HepG2 (cell line): ENCODE measurements at regions of chr14 and their contacts with region 1.

Region 1: GRCh38 chr14:56555921-56556570 is 23.6 kb upstream of the TMEM260 start:
- DNase-seq: peak; percentile 76
- ATAC-seq: peak; percentile 97
- H3K4me3 ChIP-seq: no peak overlapping the region
- H3K27ac ChIP-seq: no peak overlapping the region
- H3K4me1 ChIP-seq: peaks cover 19% of the 10 kb centered on the region
- H3K27me3 ChIP-seq: no peaks in the 10 kb centered on the region
- CTCF ChIP-seq: peak; percentile 83
- EP300 ChIP-seq: 0 out of 4 replicates have a peak, but pooled peaks of 1 of the 2 experiments have one; percentile 16
- POLR2A ChIP-seq: no peak
- RAD21 ChIP-seq: peak; percentile 70

Region 2: GRCh38 chr14:56491299-56492285 is 64.5 kb before region 1 on chr14:
- CTCF ChIA-PET with region 1: no interaction called
- POLR2A ChIA-PET with region 1: no interaction called
- in situ Hi-C with region 1: no loop called
- intact Hi-C with region 1: no loop called
- DNase-seq: peak; percentile 49
- ATAC-seq: peak; percentile 83
- H3K4me3 ChIP-seq: no peak overlapping the region
- H3K27ac ChIP-seq: no peak overlapping the region
- H3K4me1 ChIP-seq: no peaks in the 10 kb centered on the region
- H3K27me3 ChIP-seq: no peaks in the 10 kb centered on the region; a peak in 1 of 5 replicates
- CTCF ChIP-seq: peak; percentile 80
- EP300 ChIP-seq: no peak
- POLR2A ChIP-seq: no peak
- RAD21 ChIP-seq: no peak

Region 3: GRCh38 chr14:56569174-56569573 is 13.1 kb after region 1 on chr14:
- CTCF ChIA-PET with region 1: no interaction called
- POLR2A ChIA-PET with region 1: no interaction called
- in situ Hi-C with region 1: no loop called
- intact Hi-C with region 1: no loop called
- DNase-seq: no peak
- ATAC-seq: no peak
- H3K4me3 ChIP-seq: no peak overlapping the region
- H3K27ac ChIP-seq: no peak overlapping the region
- H3K4me1 ChIP-seq: no peaks in the 10 kb centered on the region
- H3K27me3 ChIP-seq: peaks cover 0 to 14% of the 10 kb centered on the region in 2 experiments; a peak in 3 of 5 replicates
- CTCF ChIP-seq: no peak
- EP300 ChIP-seq: no peak
- POLR2A ChIP-seq: no peak
- RAD21 ChIP-seq: no peak

Region 4: DNA sequence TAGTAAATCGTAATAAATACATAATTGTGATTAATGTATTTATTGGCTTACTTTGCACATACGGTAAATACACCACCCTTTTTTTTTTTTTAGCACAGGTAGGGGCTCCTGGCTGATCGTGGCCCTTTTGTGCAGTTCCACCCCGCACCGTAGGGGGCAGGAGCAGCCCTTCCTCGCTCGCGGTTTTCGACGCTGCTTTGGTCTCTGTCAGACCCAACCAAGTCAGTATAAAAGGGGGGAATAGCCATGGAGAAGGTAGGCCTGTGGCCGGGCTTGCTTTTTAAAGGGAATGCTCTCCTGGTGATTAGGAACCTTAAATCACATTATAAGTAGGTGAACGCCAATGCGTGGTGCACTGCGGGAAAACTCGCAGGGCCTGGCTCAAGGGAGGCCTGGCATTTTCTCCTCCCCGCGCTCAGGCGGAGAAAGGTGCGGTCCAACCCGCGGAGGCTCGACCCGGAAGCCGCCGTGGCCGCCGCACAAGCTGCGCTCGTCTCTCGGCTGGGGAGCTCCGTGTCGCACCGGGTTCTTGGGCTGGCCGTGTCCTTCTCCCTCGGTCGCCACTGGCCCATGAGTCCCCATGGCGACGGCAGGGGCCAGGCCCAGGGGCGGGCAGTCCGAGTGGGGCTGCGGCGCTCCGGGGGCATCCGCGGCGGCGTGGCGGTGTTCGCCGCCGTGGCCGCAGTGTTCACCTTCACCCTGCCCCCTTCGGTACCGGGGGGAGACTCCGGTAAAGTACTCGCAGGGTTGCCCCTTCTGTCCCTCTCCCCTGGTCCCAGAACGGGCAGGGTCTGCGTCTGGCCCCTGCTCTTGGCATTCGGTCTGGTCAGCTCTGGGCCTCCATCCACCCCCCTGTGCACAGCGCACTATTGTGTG is 23.5 kb after region 1 on chr14 and contains the start of gene TMEM260:
- CTCF ChIA-PET with region 1: no interaction called
- POLR2A ChIA-PET with region 1: interaction called, 3 read pairs
- in situ Hi-C with region 1: no loop called
- intact Hi-C with region 1: loop called (anchors 2 kb)
- DNase-seq: peak; percentile 81
- ATAC-seq: peak; percentile 91
- H3K4me3 ChIP-seq: peak within 1 kb of the TSS; percentile 82 to 98 (median 95)
- H3K27ac ChIP-seq: peak within 1 kb of the TSS; percentile 92
- H3K4me1 ChIP-seq: peaks cover 38% of the 10 kb centered on the region
- H3K27me3 ChIP-seq: no peaks in the 10 kb centered on the region; a peak in 1 of 5 replicates
- CTCF ChIP-seq: peak; percentile 81
- EP300 ChIP-seq: 0 out of 4 replicates have a peak, but pooled peaks of 1 of the 2 experiments have one; percentile 3
- POLR2A ChIP-seq: peak; percentile 90 to 96
- RAD21 ChIP-seq: peak; percentile 48; the same call in 1 of the 2 replicates
- total RNA-seq, gene TMEM260: 4.8 and 9.3 TPM in 2 replicates

Region 5: DNA sequence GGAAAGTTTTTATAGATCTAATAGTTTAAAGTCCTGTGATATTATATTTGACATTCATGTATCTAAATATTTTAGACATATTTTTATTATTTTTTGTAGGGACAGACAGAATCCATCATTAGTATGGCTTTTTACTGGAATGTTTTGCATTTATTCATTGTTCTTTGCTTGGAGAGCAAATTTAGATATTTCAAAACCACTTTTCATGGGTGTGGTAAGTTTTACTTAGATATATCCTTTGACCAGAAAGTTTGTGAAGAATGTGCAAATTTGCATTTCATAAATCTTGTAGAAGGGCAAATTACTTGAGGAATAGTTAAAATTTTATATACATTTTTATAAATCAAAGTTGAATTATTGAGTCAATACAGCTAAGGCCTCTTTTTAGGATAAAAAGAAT is 61.0 kb after region 1 on chr14:
- CTCF ChIA-PET with region 1: no interaction called
- POLR2A ChIA-PET with region 1: no interaction called
- in situ Hi-C with region 1: no loop called
- intact Hi-C with region 1: no loop called
- DNase-seq: no peak
- ATAC-seq: no peak
- H3K4me3 ChIP-seq: no peak overlapping the region
- H3K27ac ChIP-seq: no peak overlapping the region
- H3K4me1 ChIP-seq: no peaks in the 10 kb centered on the region
- H3K27me3 ChIP-seq: no peaks in the 10 kb centered on the region
- CTCF ChIP-seq: no peak
- EP300 ChIP-seq: no peak
- POLR2A ChIP-seq: no peak
- RAD21 ChIP-seq: no peak

Region 6: DNA sequence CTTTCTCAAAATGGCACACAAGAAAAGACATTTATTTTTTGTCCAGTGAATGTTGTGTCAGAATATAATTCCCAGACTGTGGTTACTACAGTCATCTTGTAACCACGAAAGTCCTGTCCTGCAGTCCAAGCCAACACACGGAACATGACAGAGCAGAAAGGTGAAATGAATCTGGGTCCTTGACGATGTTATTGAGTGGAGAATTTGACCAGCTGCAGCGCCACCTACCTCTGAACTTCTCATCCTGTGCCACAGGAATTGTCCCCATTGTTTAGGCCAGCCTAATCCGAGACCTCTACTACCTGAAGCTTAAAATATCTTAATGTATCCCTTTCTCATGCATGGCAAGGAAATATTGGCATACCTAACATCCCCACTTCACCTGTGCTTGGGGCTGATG is 318.3 kb after region 1 on chr14:
- CTCF ChIA-PET with region 1: interaction called, 3 read pairs
- POLR2A ChIA-PET with region 1: no interaction called
- in situ Hi-C with region 1: no loop called
- intact Hi-C with region 1: loop called (anchors 1 kb)
- DNase-seq: peak; percentile 18
- ATAC-seq: peak; percentile 81
- H3K4me3 ChIP-seq: no peak overlapping the region
- H3K27ac ChIP-seq: no peak overlapping the region
- H3K4me1 ChIP-seq: no peaks in the 10 kb centered on the region
- H3K27me3 ChIP-seq: peaks cover 0 to 7% of the 10 kb centered on the region in 2 experiments; a peak in 2 of 5 replicates
- CTCF ChIP-seq: peak; percentile 61
- EP300 ChIP-seq: no peak
- POLR2A ChIP-seq: no peak
- RAD21 ChIP-seq: no peak

Region 7: DNA sequence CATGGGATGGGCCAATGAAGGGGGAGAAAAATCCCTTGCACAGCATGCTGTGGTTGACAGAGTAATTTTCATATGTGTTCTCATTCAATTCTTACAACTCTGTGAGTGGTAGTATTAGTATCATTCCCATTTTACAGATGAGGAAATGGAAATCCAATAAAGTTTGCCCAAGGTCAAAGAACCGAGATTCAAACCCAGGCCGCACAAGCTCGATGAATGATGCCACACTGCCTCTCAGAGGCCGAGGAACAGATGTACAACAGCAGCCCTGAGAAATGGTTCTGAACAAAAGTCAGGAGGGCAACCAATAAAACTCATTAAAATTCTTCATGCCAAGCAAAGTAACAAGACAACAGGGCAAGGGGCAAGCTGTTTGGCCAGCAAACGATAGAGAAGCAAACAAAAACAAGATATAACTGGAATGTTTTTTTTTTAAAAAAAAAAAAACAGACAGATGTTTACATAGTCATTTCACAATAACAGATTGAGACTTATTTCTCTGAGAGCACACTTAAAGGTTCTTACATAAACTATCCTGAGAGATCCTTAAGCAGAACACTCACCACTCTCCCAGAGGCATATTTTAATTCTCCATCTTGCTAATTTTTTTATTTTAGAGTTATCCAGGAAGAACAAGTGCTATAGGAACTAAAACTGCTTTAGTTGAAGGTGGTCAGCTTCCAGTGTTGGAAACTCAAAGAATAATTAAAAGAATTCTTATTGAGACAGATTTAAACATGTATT is 626.9 kb after region 1 on chr14:
- CTCF ChIA-PET with region 1: no interaction called
- POLR2A ChIA-PET with region 1: no interaction called
- in situ Hi-C with region 1: no loop called
- intact Hi-C with region 1: loop called (anchors 10 kb)
- DNase-seq: peak; percentile 15
- ATAC-seq: peak; percentile 68
- H3K4me3 ChIP-seq: no peak overlapping the region
- H3K27ac ChIP-seq: no peak overlapping the region
- H3K4me1 ChIP-seq: no peaks in the 10 kb centered on the region
- H3K27me3 ChIP-seq: peaks cover 0 to 5% of the 10 kb centered on the region in 2 experiments; a peak in 2 of 5 replicates
- CTCF ChIP-seq: peak; percentile 66
- EP300 ChIP-seq: no peak
- POLR2A ChIP-seq: no peak
- RAD21 ChIP-seq: 0 out of 2 replicates have a peak, but pooled peaks have one; percentile 38